Breast epithelium (tissue), 4 donors: ENCODE measurements at regions of chr5 and their contacts with region 1.

Region 1: DNA sequence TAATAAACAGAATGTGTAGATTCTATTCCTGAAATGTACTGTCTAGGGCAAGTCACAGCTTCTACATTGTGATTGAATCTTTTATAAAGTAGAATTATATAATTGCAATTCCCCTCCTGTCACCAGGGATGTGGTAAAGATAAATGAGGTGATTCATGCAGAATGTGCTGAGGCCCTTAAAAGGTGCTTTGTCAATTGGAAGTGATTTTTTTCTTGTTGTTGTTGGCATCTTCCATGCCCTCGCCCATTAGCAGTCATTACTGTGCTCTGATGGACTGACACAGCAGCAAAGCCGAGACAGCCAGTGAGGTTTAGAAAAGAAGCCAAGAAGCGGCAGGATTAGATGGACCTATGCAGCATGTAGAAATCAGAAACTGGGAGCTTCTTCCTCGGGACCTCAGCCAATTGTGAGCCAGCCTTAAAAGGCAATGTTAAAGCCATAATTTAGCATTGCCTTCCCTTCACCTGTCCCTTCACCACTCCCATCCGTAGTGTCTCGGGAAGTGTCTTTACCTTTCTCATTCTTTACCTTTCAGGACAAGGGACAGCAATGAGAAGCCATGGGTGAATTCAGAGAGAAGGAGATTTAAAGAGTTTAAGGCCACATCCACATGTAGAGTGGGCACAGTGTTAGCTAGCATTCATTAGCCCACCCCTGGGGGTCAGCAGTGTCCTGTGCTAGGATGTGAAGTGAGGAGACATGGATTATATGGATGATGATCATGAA is 257.8 kb downstream of the PLK2 start:
- DNase-seq: no peak
- H3K4me3 ChIP-seq: no peak overlapping the region
- H3K27ac ChIP-seq: no peak overlapping the region
- H3K4me1 ChIP-seq: no peaks in the 10 kb centered on the region
- H3K27me3 ChIP-seq: no peaks in the 10 kb centered on the region
- CTCF ChIP-seq: no peak
- POLR2A ChIP-seq: no peak

Region 2: GRCh38 chr5:57243286-57244137 is 958.6 kb before region 1 on chr5:
- intact Hi-C with region 1: loop called (anchors 5 kb)
- DNase-seq: no peak
- H3K4me3 ChIP-seq: no peak overlapping the region
- H3K27ac ChIP-seq: no peak overlapping the region
- H3K4me1 ChIP-seq: no peaks in the 10 kb centered on the region
- H3K27me3 ChIP-seq: no peaks in the 10 kb centered on the region
- CTCF ChIP-seq: no peak
- POLR2A ChIP-seq: no peak

Region 3: DNA sequence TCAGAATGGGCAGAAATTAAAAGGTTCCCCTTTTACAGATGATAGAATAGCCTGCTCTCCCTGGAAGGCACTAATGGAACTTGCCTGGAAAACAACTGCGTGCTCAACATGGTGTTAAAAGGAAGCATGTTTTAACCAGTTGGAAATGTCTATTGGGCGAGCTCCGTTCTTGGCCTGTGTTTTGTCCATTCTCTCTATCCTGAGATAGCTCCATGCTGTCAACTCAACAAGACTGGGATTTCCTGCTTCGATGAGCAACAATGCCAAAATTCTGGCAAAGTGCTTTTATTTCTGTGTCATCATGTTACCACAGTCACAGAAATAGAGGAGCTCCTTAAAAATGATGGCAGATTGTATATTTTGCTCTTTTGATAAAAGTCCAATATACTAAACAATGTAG is 59.5 kb after region 1 on chr5:
- intact Hi-C with region 1: no loop called
- DNase-seq: no peak
- H3K4me3 ChIP-seq: no peak overlapping the region
- H3K27ac ChIP-seq: no peak overlapping the region
- H3K4me1 ChIP-seq: no peaks in the 10 kb centered on the region
- H3K27me3 ChIP-seq: no peaks in the 10 kb centered on the region
- CTCF ChIP-seq: no peak
- POLR2A ChIP-seq: no peak